Activated CD4-positive, alpha-beta T cell treated with anti-CD3 and anti-CD28 coated beads for 36 hours (primary cell): ENCODE measurements at regions of chr12 and their contacts with region 1.

Region 1: GRCh38 chr12:94149119-94149780 is 873 bp downstream of the PLXNC1 start:
- DNase-seq: peak; percentile 62
- ATAC-seq: peak; percentile 28
- H3K4me3 Mint-ChIP-seq: peak overlapping the region; percentile 77
- H3K27ac Mint-ChIP-seq: peak overlapping the region; percentile 25
- H3K4me1 Mint-ChIP-seq: peaks cover 17% of the 10 kb centered on the region
- H3K27me3 Mint-ChIP-seq: peaks cover 24% of the 10 kb centered on the region

Region 2: DNA sequence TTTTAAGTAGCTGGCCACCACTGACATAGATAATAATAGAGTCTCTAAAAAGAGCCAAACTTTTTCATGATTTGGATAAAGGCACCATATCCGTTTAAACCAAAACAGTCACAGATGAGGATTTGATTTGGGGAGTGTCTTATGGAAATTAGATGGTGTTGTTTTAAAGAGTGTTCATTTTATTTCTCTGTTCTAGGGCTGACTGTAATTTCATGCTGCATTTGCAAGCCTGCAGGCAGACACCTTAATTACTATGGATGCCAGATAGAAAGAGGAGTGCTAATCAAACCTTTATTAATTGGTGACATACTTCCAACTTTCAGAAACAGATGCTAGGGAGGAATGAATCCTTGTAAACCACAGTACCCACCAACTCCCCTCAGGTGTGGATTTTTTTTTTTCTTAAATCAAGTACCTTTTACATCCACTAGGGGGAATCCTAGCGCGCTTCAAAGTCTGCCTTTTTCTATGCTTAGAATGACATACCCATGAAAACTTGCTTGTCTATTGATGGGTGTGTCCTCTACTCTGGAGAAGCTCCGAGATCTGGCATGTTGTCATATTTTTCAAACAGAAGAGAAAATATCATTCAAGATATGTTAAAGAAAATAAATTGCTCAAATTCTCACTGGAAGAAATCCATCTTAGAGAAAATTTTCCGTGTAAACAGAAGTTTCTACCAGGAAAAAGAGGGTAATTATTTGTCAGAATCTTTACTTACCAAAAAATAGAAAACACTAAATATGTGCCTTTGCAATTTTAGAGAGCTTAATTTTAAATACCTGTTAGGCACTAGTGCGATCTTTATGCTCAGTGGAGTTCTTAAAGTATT is 15.1 kb before region 1 on chr12:
- CTCF ChIA-PET with region 1: interaction called, 23 read pairs
- POLR2A ChIA-PET with region 1: no interaction called
- intact Hi-C with region 1: no loop called
- DNase-seq: peak; percentile 51
- ATAC-seq: peak; percentile 91
- H3K4me3 Mint-ChIP-seq: no peak overlapping the region
- H3K27ac Mint-ChIP-seq: no peak overlapping the region
- H3K4me1 Mint-ChIP-seq: peaks cover 3% of the 10 kb centered on the region
- H3K27me3 Mint-ChIP-seq: no peaks in the 10 kb centered on the region

Region 3: DNA sequence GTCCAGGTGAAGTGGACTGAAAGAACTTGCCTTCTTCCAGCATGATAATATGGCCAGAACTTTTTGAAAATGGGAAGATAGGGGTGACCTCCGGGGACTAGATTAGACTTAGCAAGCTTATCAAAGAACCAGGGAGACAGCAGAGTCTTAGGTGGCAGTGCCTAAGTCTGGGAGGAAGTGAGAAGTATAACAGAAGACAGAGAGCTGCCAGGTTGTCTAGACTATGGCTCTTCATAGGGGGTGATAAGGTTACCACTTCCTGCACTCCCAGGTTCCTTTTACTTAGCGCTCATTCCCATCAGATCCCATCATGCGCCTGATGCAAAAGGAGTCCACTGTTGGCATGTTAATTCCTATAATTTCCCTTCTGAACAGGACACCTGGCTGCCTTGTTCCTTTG is 69.0 kb after region 1 on chr12:
- CTCF ChIA-PET with region 1: no interaction called
- POLR2A ChIA-PET with region 1: no interaction called
- intact Hi-C with region 1: no loop called
- DNase-seq: no peak
- ATAC-seq: no peak
- H3K4me3 Mint-ChIP-seq: no peak overlapping the region
- H3K27ac Mint-ChIP-seq: no peak overlapping the region
- H3K4me1 Mint-ChIP-seq: no peaks in the 10 kb centered on the region
- H3K27me3 Mint-ChIP-seq: no peaks in the 10 kb centered on the region

Region 4: DNA sequence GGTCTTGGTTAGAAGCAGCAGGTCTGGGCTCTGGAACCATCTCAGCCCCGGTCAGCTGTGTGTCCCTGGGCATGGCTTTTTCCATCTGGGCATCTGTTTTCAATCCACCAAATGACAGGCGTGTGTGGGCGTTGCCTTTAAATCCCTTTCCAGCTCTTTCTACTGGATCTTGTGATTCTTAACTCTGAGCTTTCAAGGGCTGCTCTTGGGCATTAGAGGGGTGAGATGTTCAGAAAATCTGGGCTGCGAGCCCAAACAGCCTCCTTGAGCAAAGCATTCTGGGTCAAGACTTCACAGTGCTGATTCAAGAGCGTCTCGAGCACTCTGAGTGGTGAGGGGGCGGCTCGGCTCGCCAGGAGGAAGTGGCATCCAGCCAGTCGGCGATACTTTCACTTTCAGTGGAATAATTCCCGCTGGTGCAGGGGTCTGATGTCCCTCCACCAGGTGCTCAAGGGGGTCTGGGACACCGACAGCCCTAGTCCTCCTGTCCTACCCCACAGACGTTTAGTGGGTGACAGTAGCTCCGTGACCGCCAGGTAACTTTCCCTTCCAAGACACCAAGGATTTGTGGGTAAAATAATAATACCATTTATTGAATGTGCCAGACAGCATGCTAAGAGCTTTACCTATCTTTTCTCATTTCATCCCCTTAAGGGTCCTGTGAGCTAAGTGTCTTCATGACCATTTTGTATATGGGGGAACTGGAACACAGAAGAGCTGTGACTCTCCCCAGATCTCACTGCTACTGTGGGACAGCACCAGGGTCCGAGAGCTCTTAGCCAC is 113.2 kb after region 1 on chr12:
- CTCF ChIA-PET with region 1: no interaction called
- POLR2A ChIA-PET with region 1: no interaction called
- intact Hi-C with region 1: loop called (anchors 1 to 2 kb)
- DNase-seq: peak; percentile 87
- ATAC-seq: peak; percentile 83
- H3K4me3 Mint-ChIP-seq: peak overlapping the region; percentile 81
- H3K27ac Mint-ChIP-seq: peak overlapping the region; percentile 99
- H3K4me1 Mint-ChIP-seq: peaks cover 44% of the 10 kb centered on the region
- H3K27me3 Mint-ChIP-seq: no peaks in the 10 kb centered on the region

Region 5: DNA sequence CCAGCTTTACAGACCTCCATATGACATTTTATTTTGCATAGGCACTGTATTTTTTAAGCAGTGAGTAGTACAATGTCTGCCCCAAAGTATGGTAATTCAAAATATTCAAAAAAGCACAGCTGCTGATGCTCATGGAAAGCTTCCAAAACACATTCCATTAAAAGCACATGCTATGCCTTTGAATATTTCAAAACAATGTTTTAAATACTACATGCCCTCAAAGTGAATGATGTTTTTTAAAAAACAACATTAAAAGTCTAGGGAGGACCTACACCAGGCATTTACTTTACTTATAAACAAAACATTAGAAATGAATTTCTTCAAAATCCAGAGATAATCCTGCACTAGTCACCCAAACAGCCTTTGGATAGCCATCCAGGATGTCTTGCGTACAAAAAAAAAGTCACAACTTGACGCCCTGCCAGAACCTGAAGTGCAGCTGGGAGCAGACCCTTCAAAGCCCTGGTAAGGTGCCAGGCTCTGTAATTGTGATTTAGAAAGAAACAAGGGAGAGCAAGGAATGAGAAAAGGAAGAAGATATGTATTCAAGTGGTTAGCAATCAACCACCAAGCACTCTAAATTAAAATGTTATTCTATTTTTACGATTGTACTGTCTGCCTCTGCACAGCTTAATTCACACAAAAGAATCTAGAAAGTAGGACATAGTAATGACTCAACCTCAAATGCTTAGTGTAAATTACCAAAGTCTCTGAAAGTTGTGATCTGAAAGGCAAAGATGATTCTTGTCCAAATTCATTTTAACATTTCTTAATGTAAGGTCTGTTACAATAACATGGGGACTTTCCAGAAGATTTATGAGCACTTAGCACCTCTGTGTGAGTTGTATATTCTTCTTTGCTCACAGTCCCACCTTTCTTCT is 278.5 kb after region 1 on chr12:
- CTCF ChIA-PET with region 1: interaction called, 3 read pairs
- POLR2A ChIA-PET with region 1: no interaction called
- intact Hi-C with region 1: loop called (anchors 2 to 5 kb)
- DNase-seq: peak; percentile 17
- ATAC-seq: peak; percentile 86
- H3K4me3 Mint-ChIP-seq: peak overlapping the region; percentile 25
- H3K27ac Mint-ChIP-seq: peak overlapping the region; percentile 74
- H3K4me1 Mint-ChIP-seq: peaks cover 33% of the 10 kb centered on the region
- H3K27me3 Mint-ChIP-seq: no peaks in the 10 kb centered on the region

Region 6: GRCh38 chr12:94532490-94533422 is 383.5 kb after region 1 on chr12:
- CTCF ChIA-PET with region 1: interaction called, 7 read pairs
- POLR2A ChIA-PET with region 1: no interaction called
- intact Hi-C with region 1: loop called (anchors 1 kb)
- DNase-seq: peak; percentile 84
- ATAC-seq: peak; percentile 89
- H3K4me3 Mint-ChIP-seq: no peak overlapping the region
- H3K27ac Mint-ChIP-seq: no peak overlapping the region
- H3K4me1 Mint-ChIP-seq: no peaks in the 10 kb centered on the region
- H3K27me3 Mint-ChIP-seq: peaks cover 6% of the 10 kb centered on the region

Region 7: DNA sequence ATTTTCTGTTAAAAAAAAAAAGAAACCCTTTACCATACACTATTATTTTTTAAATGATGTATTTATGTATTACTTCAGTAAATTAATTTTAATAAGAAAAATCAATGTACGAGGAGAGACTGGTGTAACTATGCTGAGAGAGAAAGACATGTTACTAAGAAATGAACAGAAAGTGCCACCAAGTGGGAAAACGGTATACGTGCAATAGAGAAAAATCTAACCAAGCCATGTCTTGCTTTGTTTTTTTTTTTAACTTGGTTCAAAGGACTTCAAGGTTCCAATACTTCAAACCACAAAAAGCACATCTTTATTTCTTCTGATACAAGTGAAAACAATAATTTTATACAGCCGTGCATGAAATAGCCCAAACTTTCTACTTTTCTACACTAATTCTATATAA is 831.3 kb after region 1 on chr12:
- CTCF ChIA-PET with region 1: no interaction called
- POLR2A ChIA-PET with region 1: no interaction called
- intact Hi-C with region 1: loop called in 1 of 2 experiments (anchors 10 kb)
- DNase-seq: no peak
- ATAC-seq: peak; percentile 64
- H3K4me3 Mint-ChIP-seq: no peak overlapping the region
- H3K27ac Mint-ChIP-seq: no peak overlapping the region
- H3K4me1 Mint-ChIP-seq: peaks cover 51% of the 10 kb centered on the region
- H3K27me3 Mint-ChIP-seq: no peaks in the 10 kb centered on the region